ENCODE measurements at regions of chr12 and their contacts with region 1.

Region 1: DNA sequence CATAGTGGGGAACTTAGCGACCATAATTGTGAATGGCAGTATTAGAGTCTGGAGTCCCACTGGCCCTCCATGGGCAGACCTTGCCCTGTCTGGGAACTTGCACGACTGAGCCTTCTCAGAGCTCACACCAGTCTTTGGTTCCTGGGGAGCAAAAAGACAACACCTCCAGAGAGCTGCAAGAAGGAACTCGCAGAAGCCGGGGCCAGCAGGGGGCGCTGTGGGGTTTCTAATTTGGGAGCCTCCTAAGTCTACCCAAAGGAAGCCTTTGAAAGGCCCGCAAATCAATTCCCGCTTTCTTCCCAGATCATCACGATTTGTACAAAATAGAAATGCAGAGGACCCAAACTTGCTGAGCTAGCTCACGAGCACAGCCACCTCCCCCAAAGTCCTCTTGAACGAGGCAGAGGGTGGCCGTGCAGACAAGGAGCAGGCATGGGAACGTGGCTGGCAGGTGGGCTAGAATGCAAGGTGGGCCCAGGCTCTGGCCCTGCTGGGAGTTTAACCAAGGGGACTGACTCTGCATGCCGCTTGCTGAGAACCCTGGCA is 46.3 kb upstream of the FBXO21 start:
- DNase-seq: peak; percentile 58
- ATAC-seq: peak; percentile 92
- H3K4me3 ChIP-seq: no peak overlapping the region
- H3K27ac ChIP-seq: no peak overlapping the region
- H3K4me1 ChIP-seq: no peaks in the 10 kb centered on the region
- H3K27me3 ChIP-seq: 0 out of 2 replicates have a peak, but pooled peaks cover 6% of the 10 kb centered on the region
- CTCF ChIP-seq: peak; percentile 70 to 92 (median 85)
- POLR2A ChIP-seq: no peak
- RAD21 ChIP-seq: peak; percentile 77

Region 2: GRCh38 chr12:117587631-117588287 is 351.2 kb after region 1 on chr12:
- CTCF ChIA-PET with region 1: interaction called, 10 read pairs
- POLR2A ChIA-PET with region 1: no interaction called
- RAD21 ChIA-PET with region 1: no interaction called
- intact Hi-C with region 1: loop called (anchors 2 kb)
- DNase-seq: peak; percentile 15
- ATAC-seq: peak; percentile 97
- H3K4me3 ChIP-seq: no peak overlapping the region
- H3K27ac ChIP-seq: no peak overlapping the region
- H3K4me1 ChIP-seq: no peaks in the 10 kb centered on the region
- H3K27me3 ChIP-seq: no peaks in the 10 kb centered on the region
- CTCF ChIP-seq: peak; percentile 76 to 91 (median 86); a peak in 5 of 6 replicates
- POLR2A ChIP-seq: no peak
- RAD21 ChIP-seq: peak; percentile 84

Region 3: GRCh38 chr12:117850048-117850447 is 613.5 kb after region 1 on chr12:
- CTCF ChIA-PET with region 1: interaction called, 12 read pairs
- POLR2A ChIA-PET with region 1: no interaction called
- RAD21 ChIA-PET with region 1: interaction called in 1 of 2 experiments, 3 read pairs
- intact Hi-C with region 1: loop called (anchors 1 kb)
- DNase-seq: peak; percentile 44
- ATAC-seq: peak; percentile 76
- H3K4me3 ChIP-seq: no peak overlapping the region
- H3K27ac ChIP-seq: no peak overlapping the region
- H3K4me1 ChIP-seq: peaks cover 0 to 20% of the 10 kb centered on the region in 2 experiments; a peak in 3 of 4 replicates
- H3K27me3 ChIP-seq: no peaks in the 10 kb centered on the region
- CTCF ChIP-seq: peak; percentile 66 to 92 (median 85); a peak in 5 of 6 replicates
- POLR2A ChIP-seq: no peak
- RAD21 ChIP-seq: peak; percentile 65

Measured in HCT116 (cell line).